Thyroid gland (tissue), 4 donors: ENCODE measurements at regions of chr12 and their contacts with region 1.

Region 1: GRCh38 chr12:123905319-123905925 is 67.2 kb downstream of the CCDC92 start:
- DNase-seq: peak; percentile 56 to 67
- H3K4me3 ChIP-seq: no peak overlapping the region
- H3K27ac ChIP-seq: no peak overlapping the region
- H3K4me1 ChIP-seq: no peaks in the 10 kb centered on the region
- H3K27me3 ChIP-seq: no peaks in the 10 kb centered on the region
- CTCF ChIP-seq: peak; percentile 68 to 88 (median 76)
- POLR2A ChIP-seq: no peak

Region 2: GRCh38 chr12:123843912-123844748 is 61.3 kb before region 1 on chr12:
- intact Hi-C with region 1: no loop called
- DNase-seq: no peak
- H3K4me3 ChIP-seq: no peak overlapping the region
- H3K27ac ChIP-seq: no peak overlapping the region
- H3K4me1 ChIP-seq: no peaks in the 10 kb centered on the region
- H3K27me3 ChIP-seq: no peaks in the 10 kb centered on the region
- CTCF ChIP-seq: no peak
- POLR2A ChIP-seq: no peak

Region 3: GRCh38 chr12:123983822-123984485 is 78.5 kb after region 1 on chr12:
- intact Hi-C with region 1: loop called (anchors 5 kb)
- DNase-seq: peak; percentile 55 to 60
- H3K4me3 ChIP-seq: no peak overlapping the region
- H3K27ac ChIP-seq: peak overlapping the region in 2 of 3 donors; percentile 30 to 87
- H3K4me1 ChIP-seq: peaks cover 16 to 51% of the 10 kb centered on the region in 2 donors
- H3K27me3 ChIP-seq: no peaks in the 10 kb centered on the region
- CTCF ChIP-seq: peak in 5 of 6 experiments; percentile 48 to 83 (median 73)
- POLR2A ChIP-seq: no peak

Region 4: DNA sequence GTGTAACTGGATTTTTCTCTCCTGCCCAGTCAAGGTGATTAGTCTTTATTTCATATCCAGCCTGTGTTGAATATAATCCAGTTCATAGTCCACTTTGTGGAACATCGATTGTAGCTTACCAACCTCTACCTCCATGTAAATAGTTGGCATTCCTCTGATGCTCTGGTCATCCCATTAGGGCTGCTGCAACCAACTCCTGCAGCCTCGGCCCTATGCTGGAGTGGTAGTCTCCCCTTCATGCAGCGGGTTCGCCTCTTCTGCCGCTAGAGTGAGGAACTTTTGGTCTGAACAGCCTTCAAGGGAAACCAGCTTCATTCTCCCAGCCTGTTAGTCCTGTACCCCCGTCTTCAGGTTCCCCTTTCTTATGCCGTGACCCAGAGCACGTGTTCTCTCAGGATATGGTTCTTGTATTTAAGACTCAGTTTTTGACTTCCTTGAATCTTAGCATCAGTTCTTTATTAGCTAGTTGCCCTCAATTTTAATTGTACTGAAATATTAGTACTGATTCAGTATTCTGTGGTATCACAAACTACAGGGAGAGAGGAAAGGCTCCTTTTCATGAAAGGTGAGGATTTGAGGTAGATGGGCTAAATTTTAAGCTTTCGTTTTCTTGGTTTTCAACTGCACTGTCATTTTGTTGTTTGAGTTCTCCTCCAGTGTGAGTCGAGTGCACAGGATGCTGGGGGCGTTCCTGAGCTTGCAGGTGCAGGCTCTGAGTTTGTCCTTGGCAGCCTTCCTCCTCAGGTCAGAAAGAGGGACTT is 100.8 kb after region 1 on chr12:
- intact Hi-C with region 1: loop called (anchors 10 kb)
- DNase-seq: no peak
- H3K4me3 ChIP-seq: no peak overlapping the region
- H3K27ac ChIP-seq: no peak overlapping the region
- H3K4me1 ChIP-seq: peaks cover 0 to 25% of the 10 kb centered on the region in 2 donors
- H3K27me3 ChIP-seq: no peaks in the 10 kb centered on the region
- CTCF ChIP-seq: no peak
- POLR2A ChIP-seq: no peak